CD4-positive, alpha-beta T cell (primary cell): ENCODE measurements at regions of chr11 and their contacts with region 1.

Region 1: GRCh38 chr11:95156916-95157541 is 67.4 kb downstream of the ENDOD1 start:
- DNase-seq: no peak
- ATAC-seq: no peak
- H3K4me3 ChIP-seq: no peak overlapping the region
- H3K4me3 Mint-ChIP-seq: no peak overlapping the region
- H3K27ac ChIP-seq: no peak overlapping the region
- H3K27ac Mint-ChIP-seq: peak overlapping the region; percentile 46
- H3K4me1 ChIP-seq: peaks cover 34% of the 10 kb centered on the region
- H3K4me1 Mint-ChIP-seq: peaks cover 56% of the 10 kb centered on the region
- H3K27me3 ChIP-seq: no peaks in the 10 kb centered on the region
- H3K27me3 Mint-ChIP-seq: no peaks in the 10 kb centered on the region
- CTCF ChIP-seq: no peak

Region 2: GRCh38 chr11:95262994-95263765 is 106.2 kb after region 1 on chr11:
- CTCF ChIA-PET with region 1: no interaction called
- POLR2A ChIA-PET with region 1: no interaction called
- intact Hi-C with region 1: no loop called
- DNase-seq: peak in 1 of 14 experiments; percentile 26
- ATAC-seq: no peak
- H3K4me3 ChIP-seq: no peak overlapping the region
- H3K4me3 Mint-ChIP-seq: no peak overlapping the region
- H3K27ac ChIP-seq: no peak overlapping the region
- H3K27ac Mint-ChIP-seq: no peak overlapping the region
- H3K4me1 ChIP-seq: no peaks in the 10 kb centered on the region
- H3K4me1 Mint-ChIP-seq: peaks cover 11% of the 10 kb centered on the region
- H3K27me3 ChIP-seq: no peaks in the 10 kb centered on the region
- H3K27me3 Mint-ChIP-seq: no peaks in the 10 kb centered on the region
- CTCF ChIP-seq: no peak

Region 3: GRCh38 chr11:95375886-95376285 is 218.9 kb after region 1 on chr11:
- CTCF ChIA-PET with region 1: no interaction called
- POLR2A ChIA-PET with region 1: no interaction called
- intact Hi-C with region 1: loop called in 1 of 2 experiments (anchors 5 kb)
- DNase-seq: no peak
- ATAC-seq: no peak
- H3K4me3 ChIP-seq: no peak overlapping the region
- H3K4me3 Mint-ChIP-seq: no peak overlapping the region
- H3K27ac ChIP-seq: no peak overlapping the region
- H3K27ac Mint-ChIP-seq: no peak overlapping the region
- H3K4me1 ChIP-seq: no peaks in the 10 kb centered on the region
- H3K4me1 Mint-ChIP-seq: no peaks in the 10 kb centered on the region
- H3K27me3 ChIP-seq: no peaks in the 10 kb centered on the region
- H3K27me3 Mint-ChIP-seq: no peaks in the 10 kb centered on the region
- CTCF ChIP-seq: no peak

Region 4: GRCh38 chr11:95505927-95506426 is 348.9 kb after region 1 on chr11:
- CTCF ChIA-PET with region 1: no interaction called
- POLR2A ChIA-PET with region 1: no interaction called
- intact Hi-C with region 1: no loop called
- DNase-seq: peak in 2 of 14 experiments; percentile 18 to 22
- ATAC-seq: no peak
- H3K4me3 ChIP-seq: no peak overlapping the region
- H3K4me3 Mint-ChIP-seq: no peak overlapping the region
- H3K27ac ChIP-seq: no peak overlapping the region
- H3K27ac Mint-ChIP-seq: no peak overlapping the region
- H3K4me1 ChIP-seq: no peaks in the 10 kb centered on the region
- H3K4me1 Mint-ChIP-seq: no peaks in the 10 kb centered on the region
- H3K27me3 ChIP-seq: no peaks in the 10 kb centered on the region
- H3K27me3 Mint-ChIP-seq: no peaks in the 10 kb centered on the region
- CTCF ChIP-seq: no peak